ENCODE measurements at regions of chr10 and their contacts with region 1.

Region 1: GRCh38 chr10:21495752-21496342 is 29.6 kb downstream of the SKIDA1 start:
- DNase-seq: peak; percentile 81 to 89
- ATAC-seq: peak; percentile 82 to 90 (median 88)
- H3K4me3 ChIP-seq: peak overlapping the region; percentile 57 to 89 (median 80)
- H3K27ac ChIP-seq: peak overlapping the region in 9 of 10 donors; percentile 79 to 91 (median 85)
- H3K4me1 ChIP-seq: peaks cover 0 to 51% (median 15%) of the 10 kb centered on the region in 9 donors
- H3K27me3 ChIP-seq: peaks cover 0 to 68% (median 0%) of the 10 kb centered on the region in 7 donors
- CTCF ChIP-seq: peak; percentile 90 to 100 (median 99)

Region 2: DNA sequence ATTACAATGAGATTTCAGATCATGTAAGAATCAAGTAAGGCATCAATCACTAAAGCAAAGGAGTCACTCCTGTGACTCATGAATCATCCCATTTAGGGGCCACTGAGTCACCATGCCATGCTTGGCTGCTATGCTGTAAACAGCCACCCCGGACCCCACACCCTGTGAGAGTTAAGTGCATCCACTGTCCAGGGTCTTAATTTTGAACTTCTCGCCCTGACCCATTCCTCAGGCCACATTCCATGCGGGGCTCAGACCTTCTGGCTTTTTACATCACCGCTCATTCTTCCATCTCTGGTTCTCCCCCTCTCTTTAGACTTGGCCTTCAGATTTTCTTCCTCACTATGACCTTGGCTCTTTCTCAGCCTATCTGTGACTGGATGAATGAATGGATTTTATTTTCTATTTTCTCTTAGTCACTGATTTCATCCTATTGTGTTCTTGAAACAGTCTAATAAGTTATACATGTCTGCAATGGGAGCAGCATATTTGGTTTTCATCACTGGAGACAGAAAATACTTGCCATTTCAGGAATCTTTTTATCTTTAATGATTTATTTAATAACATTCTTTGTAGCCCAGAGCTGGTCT is 210.0 kb before region 1 on chr10:
- intact Hi-C with region 1: loop called in 2 of 10 experiments (anchors 5 to 10 kb)
- DNase-seq: no peak
- ATAC-seq: no peak
- H3K4me3 ChIP-seq: no peak overlapping the region
- H3K27ac ChIP-seq: no peak overlapping the region
- H3K4me1 ChIP-seq: no peaks in the 10 kb centered on the region
- H3K27me3 ChIP-seq: no peaks in the 10 kb centered on the region
- CTCF ChIP-seq: no peak

Region 3: DNA sequence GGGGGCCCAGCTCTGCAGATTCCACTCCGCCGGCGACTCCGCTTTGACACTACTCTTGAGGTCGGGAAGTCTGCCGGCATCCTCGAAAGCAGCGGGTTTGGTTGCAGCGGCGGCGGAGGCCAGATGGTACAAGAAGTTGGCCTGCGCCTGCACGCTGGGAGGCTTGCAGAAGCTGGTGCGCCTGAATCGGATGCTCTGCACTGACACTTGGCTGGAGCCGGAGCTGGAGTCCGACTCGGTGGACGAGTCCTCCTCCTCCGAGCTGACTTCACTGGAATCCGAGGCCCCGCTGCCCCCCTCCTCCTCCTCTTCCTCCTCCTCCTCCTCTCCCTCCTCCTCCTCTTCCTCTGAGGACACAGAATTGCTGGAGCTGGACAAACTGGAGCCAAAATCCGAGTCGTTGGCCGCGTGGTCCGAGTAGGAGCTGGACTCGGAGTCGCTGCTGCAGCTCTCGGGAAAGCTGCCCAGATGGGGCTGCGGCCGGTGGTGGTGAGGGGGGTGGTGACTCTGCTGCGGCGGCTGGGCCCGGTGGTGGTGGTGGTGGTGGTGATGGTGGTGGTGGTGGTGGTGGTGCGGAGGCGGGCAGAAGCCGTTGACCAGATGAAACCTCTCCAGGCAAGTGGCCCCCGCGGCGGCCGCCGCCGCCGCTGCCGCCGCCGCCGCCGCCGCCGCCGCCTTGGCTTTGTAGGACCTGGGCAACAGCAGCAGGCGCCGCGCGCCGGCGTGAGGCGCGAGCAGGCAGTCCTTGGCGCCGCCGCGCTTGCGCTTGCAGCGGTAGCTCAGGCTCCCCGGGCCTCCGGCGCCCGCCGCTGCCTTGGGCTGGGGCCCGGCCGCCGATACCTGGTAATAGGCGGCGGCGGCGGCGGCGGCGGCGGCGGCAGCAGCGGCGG is 20.6 kb after region 1 on chr10:
- intact Hi-C with region 1: loop called in 2 of 10 experiments (anchors 2 kb)
- DNase-seq: peak; percentile 51 to 66
- ATAC-seq: peak; percentile 15 to 72 (median 48)
- H3K4me3 ChIP-seq: peak overlapping the region; percentile 39 to 72 (median 64)
- H3K27ac ChIP-seq: peak overlapping the region; percentile 76 to 93 (median 81)
- H3K4me1 ChIP-seq: peaks cover 0 to 57% (median 35%) of the 10 kb centered on the region in 9 donors
- H3K27me3 ChIP-seq: peaks cover 0 to 92% (median 0%) of the 10 kb centered on the region in 7 donors
- CTCF ChIP-seq: no peak

Region 4: GRCh38 chr10:21675157-21675796 is 179.4 kb after region 1 on chr10:
- intact Hi-C with region 1: loop called in 2 of 10 experiments (anchors 5 to 10 kb)
- DNase-seq: no peak
- ATAC-seq: peak in 1 of 8 donors; percentile 57
- H3K4me3 ChIP-seq: no peak overlapping the region
- H3K27ac ChIP-seq: no peak overlapping the region
- H3K4me1 ChIP-seq: peaks cover 0 to 21% (median 5%) of the 10 kb centered on the region in 9 donors
- H3K27me3 ChIP-seq: no peaks in the 10 kb centered on the region
- CTCF ChIP-seq: peak; percentile 26 to 75 (median 65)

Region 5: GRCh38 chr10:21694631-21695030 is 198.8 kb after region 1 on chr10:
- intact Hi-C with region 1: no loop called
- DNase-seq: no peak
- ATAC-seq: peak in 1 of 8 donors; percentile 28
- H3K4me3 ChIP-seq: no peak overlapping the region
- H3K27ac ChIP-seq: no peak overlapping the region
- H3K4me1 ChIP-seq: peaks cover 0 to 19% (median 0%) of the 10 kb centered on the region in 9 donors
- H3K27me3 ChIP-seq: no peaks in the 10 kb centered on the region
- CTCF ChIP-seq: no peak

Region 6: DNA sequence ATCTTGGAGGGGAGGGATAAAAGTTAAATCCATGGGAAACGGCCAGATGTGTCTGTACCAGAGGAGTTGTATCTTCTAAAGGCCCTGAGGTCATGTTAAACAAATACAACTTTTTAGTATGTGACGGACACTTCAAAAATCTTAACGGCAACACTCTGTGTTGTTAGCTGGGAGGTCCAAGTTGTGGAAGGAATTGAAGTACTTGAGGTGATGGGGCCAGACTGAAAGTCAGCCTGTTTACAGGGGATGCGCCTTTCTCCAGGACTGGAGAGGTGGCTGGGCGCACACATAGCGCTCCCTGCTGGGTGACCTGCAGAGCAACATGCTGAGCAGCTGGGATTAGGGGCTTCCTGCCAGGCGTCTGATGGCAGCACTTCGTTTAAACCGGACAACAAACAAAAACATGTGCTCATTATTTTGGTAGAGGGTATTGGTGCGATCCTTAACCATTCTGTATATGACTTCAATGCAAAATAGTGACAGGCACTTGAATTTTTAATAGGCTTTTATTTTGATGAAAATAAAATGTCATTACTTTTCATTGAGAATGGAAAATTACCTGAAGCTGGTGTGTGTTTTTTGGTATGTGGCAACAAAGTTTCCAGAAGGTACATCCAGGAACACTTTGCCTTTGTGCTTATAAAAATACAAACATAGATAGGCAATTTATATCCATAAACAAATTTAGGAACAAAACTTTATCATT is 236.4 kb after region 1 on chr10:
- intact Hi-C with region 1: loop called (anchors 1 to 5 kb)
- DNase-seq: peak; percentile 49 to 65
- ATAC-seq: peak; percentile 85 to 98 (median 95)
- H3K4me3 ChIP-seq: no peak overlapping the region
- H3K27ac ChIP-seq: no peak overlapping the region
- H3K4me1 ChIP-seq: peaks cover 0 to 16% (median 5%) of the 10 kb centered on the region in 9 donors
- H3K27me3 ChIP-seq: no peaks in the 10 kb centered on the region
- CTCF ChIP-seq: peak; percentile 66 to 95 (median 90)

Region 7: DNA sequence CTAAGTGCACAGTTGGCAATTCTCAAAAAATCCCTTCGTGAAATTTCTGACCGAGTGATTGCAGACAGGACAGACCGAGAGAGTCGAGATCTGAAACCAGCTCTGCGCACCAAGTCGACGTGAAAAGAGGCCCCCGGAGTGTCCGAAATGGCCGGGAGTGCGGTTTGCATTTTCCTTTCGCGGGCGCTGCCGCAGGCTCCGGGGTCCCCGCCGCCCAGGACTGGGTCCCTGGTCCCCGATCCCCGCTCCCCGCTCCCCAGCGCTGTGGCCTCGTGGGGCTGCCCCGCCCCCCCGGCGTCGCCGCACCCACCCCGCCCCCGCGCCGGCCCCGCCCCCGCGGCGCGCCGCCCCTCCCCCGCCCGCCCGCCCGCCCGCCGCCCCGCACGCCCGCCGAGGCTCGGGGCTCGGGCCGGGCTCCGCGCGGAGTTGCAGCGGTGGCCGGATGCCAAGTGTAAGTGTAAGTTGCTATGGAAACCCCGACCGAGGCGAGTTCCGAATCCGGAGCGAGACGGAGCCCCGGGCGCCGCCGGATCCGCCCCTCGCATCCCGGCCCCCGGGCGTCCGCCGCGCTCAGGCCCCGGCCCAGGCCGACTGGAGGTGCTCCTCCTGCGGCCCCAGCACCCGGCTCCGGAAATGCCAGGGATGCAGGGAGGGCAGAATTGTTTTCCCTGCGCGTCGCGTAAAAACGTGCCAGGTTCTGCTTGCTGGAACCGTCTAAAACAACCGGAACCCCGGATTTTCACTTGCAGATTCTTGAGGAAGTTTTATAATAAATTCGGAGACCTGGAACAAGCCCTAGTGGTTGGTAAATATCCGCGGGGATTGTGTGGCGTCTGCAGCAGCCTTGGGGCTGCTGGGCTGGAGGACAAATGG is 829.7 kb after region 1 on chr10:
- intact Hi-C with region 1: loop called in 2 of 10 experiments (anchors 10 kb)
- DNase-seq: peak; percentile 77 to 80
- ATAC-seq: peak; percentile 32 to 66 (median 52)
- H3K4me3 ChIP-seq: peak overlapping the region; percentile 29 to 72 (median 64)
- H3K27ac ChIP-seq: peak overlapping the region in 9 of 10 donors; percentile 45 to 78 (median 59)
- H3K4me1 ChIP-seq: peaks cover 3 to 41% (median 35%) of the 10 kb centered on the region in 9 donors
- H3K27me3 ChIP-seq: peaks cover 0 to 33% (median 5%) of the 10 kb centered on the region in 7 donors
- CTCF ChIP-seq: peak in 2 of 9 donors; percentile 9 to 11